Endothelial cell of umbilical vein (primary cell): ENCODE measurements at regions of chr12 and their contacts with region 1.

Region 1: GRCh38 chr12:104825408-104825807 is 132.7 kb downstream of the SLC41A2 start:
- DNase-seq: no peak
- H3K4me3 ChIP-seq: no peak overlapping the region
- H3K27ac ChIP-seq: no peak overlapping the region
- H3K4me1 ChIP-seq: no peaks in the 10 kb centered on the region
- H3K27me3 ChIP-seq: no peaks in the 10 kb centered on the region
- CTCF ChIP-seq: peak; percentile 16 to 35
- POLR2A ChIP-seq: no peak

Region 2: GRCh38 chr12:104727726-104728465 is 97.5 kb before region 1 on chr12:
- CTCF ChIA-PET with region 1: no interaction called
- POLR2A ChIA-PET with region 1: no interaction called
- dilution Hi-C with region 1: no loop called
- intact Hi-C with region 1: loop called (anchors 5 kb)
- DNase-seq: peak; percentile 15
- H3K4me3 ChIP-seq: no peak overlapping the region
- H3K27ac ChIP-seq: no peak overlapping the region
- H3K4me1 ChIP-seq: peaks cover 13% of the 10 kb centered on the region
- H3K27me3 ChIP-seq: no peaks in the 10 kb centered on the region
- CTCF ChIP-seq: no peak
- POLR2A ChIP-seq: no peak

Region 3: DNA sequence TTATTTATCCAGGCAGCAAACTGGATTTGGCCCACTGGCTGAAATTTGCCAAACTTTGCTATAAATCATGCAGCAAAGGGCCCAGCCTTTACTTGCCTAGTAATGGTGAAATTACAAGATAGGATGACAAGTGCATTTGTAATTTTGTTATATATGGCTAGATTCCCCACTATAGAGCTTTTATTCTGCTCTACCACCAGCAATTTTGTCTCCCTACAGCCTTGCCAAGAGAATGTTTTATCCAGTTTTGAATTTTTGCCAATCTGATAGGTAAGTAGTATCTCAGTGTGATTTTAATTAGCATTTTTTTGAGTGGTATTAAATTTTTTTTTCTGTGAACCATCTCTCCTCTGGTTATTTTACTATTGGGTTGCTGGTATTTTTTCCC is 28.9 kb before region 1 on chr12:
- CTCF ChIA-PET with region 1: no interaction called
- POLR2A ChIA-PET with region 1: no interaction called
- dilution Hi-C with region 1: no loop called
- intact Hi-C with region 1: no loop called
- DNase-seq: no peak
- H3K4me3 ChIP-seq: no peak overlapping the region
- H3K27ac ChIP-seq: no peak overlapping the region
- H3K4me1 ChIP-seq: no peaks in the 10 kb centered on the region
- H3K27me3 ChIP-seq: no peaks in the 10 kb centered on the region
- CTCF ChIP-seq: no peak
- POLR2A ChIP-seq: no peak